ENCODE measurements at regions of chr19 and their contacts with region 1.

Region 1: GRCh38 chr19:12777217-12778016 is 2.1 kb upstream of the HOOK2 start:
- DNase-seq: peak; percentile 82 to 86 (median 85)
- ATAC-seq: peak; percentile 54 to 63 (median 60)
- H3K4me3 ChIP-seq: peak overlapping the region; percentile 56 to 69 (median 60)
- H3K27ac ChIP-seq: peak overlapping the region; percentile 72 to 94 (median 79)
- H3K4me1 ChIP-seq: peaks cover 0 to 15% (median 3%) of the 10 kb centered on the region in 4 donors
- H3K27me3 ChIP-seq: no peaks in the 10 kb centered on the region
- CTCF ChIP-seq: peak; percentile 96 to 98 (median 96)
- POLR2A ChIP-seq: no peak

Region 2: DNA sequence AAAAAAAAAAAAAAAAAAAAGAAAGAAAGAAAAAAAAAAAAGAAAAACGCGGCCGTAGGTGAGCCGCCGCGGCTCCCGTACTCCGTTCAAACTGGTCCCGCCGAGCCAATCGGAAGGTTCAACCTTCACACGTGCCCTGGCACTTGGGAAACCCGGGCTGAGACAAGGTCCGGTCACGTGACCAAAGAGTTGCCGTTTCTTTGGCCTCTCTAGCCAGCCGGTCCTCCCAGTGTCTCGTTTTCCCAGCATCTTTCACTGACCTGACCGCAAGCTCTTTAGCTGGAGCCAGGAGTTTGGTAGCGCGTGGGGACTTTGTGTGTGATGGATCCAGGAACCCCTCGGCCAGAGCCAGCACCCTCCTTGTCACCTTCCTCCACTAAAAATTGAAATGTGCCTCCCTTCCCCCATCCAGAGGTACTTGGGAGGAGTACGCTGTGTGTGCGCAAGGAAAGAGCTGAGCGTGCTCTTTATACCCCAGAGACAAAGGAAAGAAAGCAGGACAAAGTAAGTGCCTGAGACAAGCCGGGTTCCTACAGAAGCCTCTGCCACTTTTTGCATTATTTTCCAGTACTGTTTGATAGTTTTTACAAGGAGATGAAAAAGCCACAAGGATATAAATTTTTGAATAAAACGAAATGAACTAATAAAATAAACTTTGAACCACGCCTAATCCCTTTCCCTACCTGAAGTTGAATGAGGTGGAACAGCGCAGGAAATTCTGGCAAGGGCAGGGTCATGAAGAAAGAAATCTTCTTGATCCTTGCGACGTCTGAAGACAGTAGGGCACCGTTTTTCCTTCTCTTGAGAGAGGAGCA is 54.6 kb before region 1 on chr19:
- intact Hi-C with region 1: loop called in 1 of 2 experiments (anchors 10 kb)
- DNase-seq: peak; percentile 96 to 98 (median 98)
- ATAC-seq: peak; percentile 87 to 92 (median 90)
- H3K4me3 ChIP-seq: peak overlapping the region; percentile 56 to 75 (median 60)
- H3K27ac ChIP-seq: peak overlapping the region; percentile 71 to 82 (median 81)
- H3K4me1 ChIP-seq: peaks cover 0 to 16% (median 3%) of the 10 kb centered on the region in 4 donors
- H3K27me3 ChIP-seq: no peaks in the 10 kb centered on the region
- CTCF ChIP-seq: no peak
- POLR2A ChIP-seq: no peak